ENCODE measurements at regions of chr9 and their contacts with region 1.

Region 1: DNA sequence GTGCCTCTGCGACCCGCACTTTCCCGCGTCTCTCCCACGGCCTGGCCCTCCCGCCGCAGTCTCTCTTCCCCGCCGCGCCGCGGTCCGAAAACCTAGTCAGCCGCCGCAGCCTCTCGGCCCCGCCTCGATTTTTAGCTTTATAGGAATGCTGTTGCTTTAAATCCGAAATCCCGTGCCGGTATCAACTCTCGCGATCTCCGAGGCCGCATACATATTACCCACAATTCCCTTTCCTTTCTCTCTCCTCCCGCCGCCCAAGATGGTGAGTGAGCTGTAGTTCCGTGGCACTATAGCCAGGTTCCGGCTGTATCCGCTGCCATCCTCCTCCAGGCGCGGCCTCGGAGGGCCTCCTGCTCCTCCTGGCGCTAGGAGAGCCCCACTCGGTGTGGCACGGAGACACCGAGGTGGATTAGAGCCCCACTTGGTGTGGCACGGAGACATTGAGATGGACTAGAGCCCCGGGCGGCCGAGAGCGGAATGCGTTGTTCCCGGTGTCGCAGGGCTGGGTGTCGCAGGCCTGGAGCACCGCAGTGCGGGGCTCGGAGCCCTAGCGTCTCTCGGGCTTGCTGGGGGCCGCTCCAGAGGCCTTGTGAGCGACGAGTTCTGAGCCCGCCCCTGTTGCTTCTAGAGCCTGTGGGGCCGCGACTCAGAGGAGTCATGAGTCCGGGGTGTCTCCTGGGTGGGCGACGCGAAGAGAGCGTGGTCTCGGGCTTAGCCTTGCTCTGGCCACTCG is at the starts of genes MED22 and RPL7A:
- DNase-seq: peak; percentile 87
- ATAC-seq: peak; percentile 78
- H3K4me3 Mint-ChIP-seq: peak within 1 kb of the TSS; percentile 100
- H3K27ac Mint-ChIP-seq: peak within 1 kb of the TSS; percentile 99
- H3K4me1 Mint-ChIP-seq: peaks cover 30% of the 10 kb centered on the region
- H3K27me3 Mint-ChIP-seq: no peaks in the 10 kb centered on the region
- total RNA-seq, gene MED22: 27.8 to 35.5 TPM
- total RNA-seq, gene RPL7A: 1,843 to 1,855 TPM

Region 2: DNA sequence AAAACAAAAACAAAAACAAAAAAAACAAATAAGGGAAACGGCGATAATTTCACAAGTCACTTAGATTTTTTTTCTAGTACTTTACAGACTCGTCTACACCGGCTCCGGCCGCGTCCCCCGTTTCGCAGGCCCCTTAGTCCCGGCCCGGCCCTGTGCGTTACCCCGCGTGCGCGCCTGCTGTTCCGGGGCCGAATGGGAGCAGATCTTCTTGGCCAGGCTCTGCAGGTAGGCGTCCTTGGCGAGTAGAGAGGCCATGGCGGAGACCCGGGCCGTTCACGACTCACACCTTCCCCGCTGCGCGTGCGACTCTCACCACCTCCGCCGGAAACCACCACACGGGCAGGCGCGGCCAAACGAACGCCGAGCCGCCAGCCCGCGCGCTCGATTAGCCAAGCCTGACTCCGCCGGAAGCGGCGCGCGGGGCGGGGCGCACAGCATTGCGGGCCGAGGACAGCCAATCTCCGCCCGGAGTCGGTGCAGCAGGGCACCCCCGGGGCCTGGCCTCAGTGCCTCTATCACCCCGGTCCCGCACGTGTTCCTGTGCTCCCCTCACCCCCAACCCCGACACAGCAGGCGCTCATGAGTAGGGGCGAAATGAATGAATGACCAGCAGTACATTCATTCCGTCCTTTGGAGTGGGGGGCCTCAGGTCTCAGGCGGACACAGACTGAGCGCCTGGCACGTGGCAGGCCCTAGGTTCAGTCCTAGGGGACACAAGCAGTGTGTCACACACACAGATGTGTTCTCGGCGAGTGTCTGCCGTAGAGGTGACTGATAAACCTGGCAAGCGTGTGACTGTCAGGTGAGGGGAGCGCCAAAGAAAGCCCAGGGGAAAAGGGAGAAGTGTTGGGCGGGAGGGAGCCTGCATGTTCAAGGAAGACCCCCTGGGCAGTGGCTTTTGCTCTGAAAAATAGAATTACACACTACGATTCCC is 12.0 kb before region 1 on chr9 and contains the start of gene SURF6:
- POLR2A ChIA-PET with region 1: interaction called, 19 read pairs
- DNase-seq: peak; percentile 98
- ATAC-seq: peak; percentile 91
- H3K4me3 Mint-ChIP-seq: peak within 1 kb of the TSS; percentile 94
- H3K27ac Mint-ChIP-seq: peak within 1 kb of the TSS; percentile 95
- H3K4me1 Mint-ChIP-seq: peaks cover 35% of the 10 kb centered on the region
- H3K27me3 Mint-ChIP-seq: no peaks in the 10 kb centered on the region
- total RNA-seq, gene SURF6: 20.5 to 21.0 TPM